ENCODE measurements at regions of chr11 and their contacts with region 1.

Region 1: DNA sequence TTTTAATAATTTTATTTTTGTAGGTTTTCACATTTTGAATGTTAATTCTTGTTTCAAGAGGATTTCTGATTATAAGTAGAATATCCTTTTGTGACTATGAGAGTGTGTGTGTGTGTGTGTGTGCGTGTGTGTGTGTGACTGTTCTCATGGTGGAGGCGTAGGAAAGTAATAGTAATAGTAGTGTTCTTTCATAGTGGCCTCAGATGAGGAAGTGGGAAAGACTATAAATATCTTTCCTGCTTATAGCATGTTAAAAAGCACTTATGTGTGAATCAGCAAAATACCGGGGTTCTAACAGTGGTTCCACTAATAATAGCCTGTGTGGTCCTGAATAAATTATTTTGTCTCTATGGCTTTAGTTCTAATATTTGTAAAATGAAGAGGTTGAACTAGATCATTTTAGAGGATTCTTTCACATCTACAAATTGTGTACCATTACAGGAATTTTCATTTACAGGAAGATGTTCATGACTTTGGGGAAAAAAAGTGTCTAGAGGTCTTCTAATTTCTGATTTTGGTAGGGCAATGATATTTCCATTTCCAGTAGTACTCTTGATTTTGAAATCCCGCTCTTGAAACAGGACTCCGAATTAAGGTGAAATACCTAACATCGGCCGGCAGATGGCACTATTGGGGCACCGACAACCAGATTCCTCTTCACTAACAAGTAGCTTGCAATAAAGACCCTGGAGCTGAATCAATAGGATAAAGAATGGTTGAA is 29.9 kb upstream of the OR10G7 start:
- DNase-seq: peak; percentile 71
- CTCF ChIP-seq: peak; percentile 46

Region 2: DNA sequence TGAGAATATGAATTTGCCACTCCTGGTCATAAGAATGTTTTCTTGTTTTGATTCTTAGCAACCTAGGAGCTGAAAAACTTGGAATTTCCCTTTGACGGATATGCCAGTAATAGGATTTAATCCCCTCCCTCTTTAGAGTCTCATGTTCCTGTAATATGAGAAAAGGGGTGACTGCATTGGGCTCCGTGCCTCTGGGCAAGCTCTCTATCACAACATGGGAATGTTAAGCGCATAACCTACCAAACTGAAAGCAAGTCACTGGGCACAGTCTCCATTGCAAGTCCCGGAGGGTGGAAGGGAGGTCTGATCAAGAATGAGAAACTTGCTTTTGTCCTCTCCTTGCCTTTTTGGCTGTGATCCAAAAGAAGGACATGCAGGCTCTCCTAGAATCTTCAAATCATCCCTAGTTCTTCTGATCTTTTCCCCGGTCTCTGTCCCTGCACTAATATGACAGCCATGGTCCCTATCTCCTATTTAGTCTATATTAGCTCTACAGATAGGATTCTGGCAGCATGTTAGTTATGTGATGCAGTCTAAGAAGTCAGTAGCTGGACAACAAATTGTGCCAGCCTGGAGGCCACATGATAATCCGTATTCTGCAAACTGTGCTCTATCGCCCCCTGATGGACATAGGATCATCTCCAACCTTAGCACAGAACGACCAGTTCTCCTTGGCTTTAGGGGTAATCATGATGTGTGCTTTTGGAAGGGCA is 123.8 kb after region 1 on chr11:
- in situ Hi-C with region 1: loop called (anchors 10 kb)
- DNase-seq: peak; percentile 49
- CTCF ChIP-seq: peak; percentile 61

Region 3: GRCh38 chr11:124225471-124225870 is 154.4 kb after region 1 on chr11:
- in situ Hi-C with region 1: no loop called
- DNase-seq: no peak
- CTCF ChIP-seq: no peak

Region 4: DNA sequence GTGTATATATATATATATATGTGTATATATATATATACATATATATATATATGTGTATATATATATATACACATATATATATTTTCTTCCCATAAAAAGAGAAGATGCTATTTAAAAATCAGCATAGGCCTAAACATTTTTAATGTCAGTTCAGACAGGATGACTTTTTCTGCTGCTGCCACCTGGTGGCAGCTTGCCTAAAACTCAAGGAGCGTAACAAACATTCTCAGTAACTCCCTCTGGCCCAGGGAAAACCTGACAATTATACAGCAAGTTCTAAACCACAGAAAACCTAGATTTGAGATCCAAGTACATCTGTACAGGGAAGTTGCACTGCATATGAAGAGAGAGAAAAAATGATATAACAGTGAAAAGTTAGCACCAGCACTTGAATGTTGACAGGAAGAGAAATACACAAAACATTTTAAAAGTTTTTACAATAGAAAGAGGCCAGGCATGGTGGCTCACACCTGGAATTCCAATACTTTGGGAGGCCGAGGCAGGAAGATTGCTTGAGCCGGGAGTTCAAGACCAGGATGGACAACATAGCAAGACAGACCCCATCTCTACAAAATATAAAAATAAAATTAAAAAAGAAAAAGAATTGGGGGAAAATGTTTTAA is 515.3 kb after region 1 on chr11:
- in situ Hi-C with region 1: loop called (anchors 25 kb)
- DNase-seq: peak; percentile 38
- CTCF ChIP-seq: peak; percentile 72